GM10248 (cell line): ENCODE measurements at regions of chr3 and their contacts with region 1.

Region 1: GRCh38 chr3:159472611-159473010 is 516.0 kb upstream of the IL12A start:
- DNase-seq: no peak
- CTCF ChIP-seq: no peak

Region 2: GRCh38 chr3:159432682-159433340 is 39.8 kb before region 1 on chr3:
- CTCF ChIA-PET with region 1: no interaction called
- POLR2A ChIA-PET with region 1: no interaction called
- DNase-seq: no peak
- CTCF ChIP-seq: no peak

Region 3: GRCh38 chr3:159447841-159448240 is 24.8 kb before region 1 on chr3:
- CTCF ChIA-PET with region 1: no interaction called
- POLR2A ChIA-PET with region 1: no interaction called
- DNase-seq: no peak
- CTCF ChIP-seq: no peak

Region 4: GRCh38 chr3:159458985-159459384 is 13.6 kb before region 1 on chr3:
- CTCF ChIA-PET with region 1: interaction called, 17 read pairs
- POLR2A ChIA-PET with region 1: no interaction called
- DNase-seq: no peak
- CTCF ChIP-seq: no peak

Region 5: DNA sequence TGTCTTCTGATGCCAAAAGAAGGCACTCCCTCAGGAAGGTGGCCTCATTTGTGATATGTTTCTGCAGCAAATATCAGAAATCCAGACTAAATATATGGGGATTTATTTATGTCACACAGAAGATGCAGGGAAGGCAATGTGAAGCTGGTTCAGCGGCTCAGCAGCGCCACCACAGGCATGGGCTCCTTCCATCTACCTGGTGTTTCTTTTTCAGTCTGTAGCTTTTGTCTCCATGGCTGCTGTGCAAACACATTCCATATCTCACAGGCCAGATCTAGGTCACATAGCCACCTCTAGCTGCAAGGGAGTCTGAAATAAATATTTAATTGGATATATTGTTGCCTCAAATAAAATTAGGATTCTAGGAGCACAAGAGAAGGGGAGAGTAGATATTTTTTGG is 14.0 kb after region 1 on chr3:
- CTCF ChIA-PET with region 1: interaction called, 19 read pairs
- POLR2A ChIA-PET with region 1: no interaction called
- DNase-seq: no peak
- CTCF ChIP-seq: peak; percentile 32

Region 6: DNA sequence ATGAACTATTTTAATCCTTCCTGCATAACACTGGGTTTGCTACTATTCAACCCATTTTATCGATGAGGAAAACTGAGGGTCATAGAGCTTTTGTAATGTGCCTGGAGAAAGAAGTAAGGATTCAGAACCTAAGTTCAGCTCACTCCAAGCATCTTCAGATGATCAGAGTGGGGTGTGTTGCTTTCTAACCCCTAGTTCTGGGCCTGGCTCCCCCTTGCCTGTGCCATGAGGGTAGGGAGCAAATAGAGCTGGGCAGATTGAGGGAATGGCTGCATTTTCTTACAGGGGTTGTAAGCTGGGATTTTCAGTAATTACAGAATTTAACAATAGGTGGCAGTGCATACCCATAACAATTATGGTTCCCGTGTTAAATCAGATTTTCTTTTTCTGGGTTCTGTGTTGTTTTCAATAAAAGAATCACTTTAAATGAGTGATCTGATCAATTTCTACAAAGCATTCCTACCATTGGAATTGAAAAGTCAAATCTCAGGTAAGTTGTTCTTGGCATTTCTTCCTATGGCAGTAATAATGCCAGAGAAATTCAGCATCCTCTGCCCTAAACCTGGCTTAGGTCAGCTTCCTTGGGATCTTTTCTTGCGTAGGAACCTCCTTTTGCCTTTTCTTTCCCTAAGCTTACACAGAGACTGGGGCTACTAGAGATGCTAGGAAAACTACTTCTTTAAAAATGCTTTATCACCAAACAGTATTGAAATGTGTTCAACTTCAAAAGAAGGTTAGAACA is 412.2 kb after region 1 on chr3:
- CTCF ChIA-PET with region 1: no interaction called
- POLR2A ChIA-PET with region 1: no interaction called
- DNase-seq: peak; percentile 58
- CTCF ChIP-seq: peak; percentile 56